WTC11 (cell line): ENCODE measurements at regions of chr15 and their contacts with region 1.

Region 1: DNA sequence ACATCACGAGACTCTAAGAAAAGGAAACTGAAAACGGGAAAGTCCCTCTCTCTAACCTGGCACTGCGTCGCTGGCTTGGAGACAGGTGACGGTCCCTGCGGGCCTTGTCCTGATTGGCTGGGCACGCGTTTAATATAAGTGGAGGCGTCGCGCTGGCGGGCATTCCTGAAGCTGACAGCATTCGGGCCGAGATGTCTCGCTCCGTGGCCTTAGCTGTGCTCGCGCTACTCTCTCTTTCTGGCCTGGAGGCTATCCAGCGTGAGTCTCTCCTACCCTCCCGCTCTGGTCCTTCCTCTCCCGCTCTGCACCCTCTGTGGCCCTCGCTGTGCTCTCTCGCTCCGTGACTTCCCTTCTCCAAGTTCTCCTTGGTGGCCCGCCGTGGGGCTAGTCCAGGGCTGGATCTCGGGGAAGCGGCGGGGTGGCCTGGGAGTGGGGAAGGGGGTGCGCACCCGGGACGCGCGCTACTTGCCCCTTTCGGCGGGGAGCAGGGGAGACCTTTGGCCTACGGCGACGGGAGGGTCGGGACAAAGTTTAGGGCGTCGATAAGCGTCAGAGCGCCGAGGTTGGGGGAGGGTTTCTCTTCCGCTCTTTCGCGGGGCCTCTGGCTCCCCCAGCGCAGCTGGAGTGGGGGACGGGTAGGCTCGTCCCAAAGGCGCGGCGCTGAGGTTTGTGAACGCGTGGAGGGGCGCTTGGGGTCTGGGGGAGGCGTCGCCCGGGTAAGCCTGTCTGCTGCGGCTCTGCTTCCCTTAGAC is at the start of gene B2M:
- DNase-seq: peak; percentile 94
- ATAC-seq: peak; percentile 95
- H3K4me3 Mint-ChIP-seq: peak within 1 kb of the TSS; percentile 94
- H3K27ac Mint-ChIP-seq: peak within 1 kb of the TSS; percentile 96
- H3K4me1 Mint-ChIP-seq: peaks cover 13% of the 10 kb centered on the region
- H3K27me3 Mint-ChIP-seq: peaks cover 15% of the 10 kb centered on the region
- CTCF ChIP-seq: no peak
- total RNA-seq, gene B2M: 88.2 to 105 TPM (median 102 TPM) in 3 replicates

Region 2: GRCh38 chr15:44620081-44620480 is 91.5 kb before region 1 on chr15:
- CTCF ChIA-PET with region 1: no interaction called
- POLR2A ChIA-PET with region 1: no interaction called
- DNase-seq: no peak
- ATAC-seq: no peak
- H3K4me3 Mint-ChIP-seq: no peak overlapping the region
- H3K27ac Mint-ChIP-seq: no peak overlapping the region
- H3K4me1 Mint-ChIP-seq: no peaks in the 10 kb centered on the region
- H3K27me3 Mint-ChIP-seq: no peaks in the 10 kb centered on the region
- CTCF ChIP-seq: no peak

Region 3: DNA sequence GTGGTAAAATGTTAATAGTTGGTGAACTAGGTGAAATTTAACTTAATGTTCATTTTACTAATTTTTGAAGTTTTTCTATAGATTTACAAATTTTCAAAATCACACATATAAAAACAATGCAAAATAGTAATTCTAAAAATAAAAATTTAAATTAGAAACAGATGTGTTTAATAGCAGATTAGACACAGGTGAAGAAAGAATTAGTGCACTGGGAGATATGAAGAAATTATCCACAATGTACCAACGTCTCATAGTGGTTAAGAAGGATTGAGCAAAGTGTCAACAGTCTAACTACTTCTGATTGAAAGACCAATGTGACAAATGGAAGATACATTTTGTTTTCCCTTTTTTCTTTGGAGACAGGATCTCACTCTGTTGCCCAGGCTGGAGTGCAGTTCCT is 74.6 kb before region 1 on chr15:
- CTCF ChIA-PET with region 1: no interaction called
- POLR2A ChIA-PET with region 1: no interaction called
- DNase-seq: no peak
- ATAC-seq: no peak
- H3K4me3 Mint-ChIP-seq: no peak overlapping the region
- H3K27ac Mint-ChIP-seq: no peak overlapping the region
- H3K4me1 Mint-ChIP-seq: no peaks in the 10 kb centered on the region
- H3K27me3 Mint-ChIP-seq: no peaks in the 10 kb centered on the region
- CTCF ChIP-seq: no peak

Region 4: GRCh38 chr15:44728576-44729407 is 17.3 kb after region 1 on chr15:
- CTCF ChIA-PET with region 1: interaction called, 18 read pairs
- POLR2A ChIA-PET with region 1: interaction called, 37 read pairs
- DNase-seq: peak; percentile 88
- ATAC-seq: peak; percentile 94
- H3K4me3 Mint-ChIP-seq: peak overlapping the region; percentile 97
- H3K27ac Mint-ChIP-seq: peak overlapping the region; percentile 99
- H3K4me1 Mint-ChIP-seq: peaks cover 32% of the 10 kb centered on the region
- H3K27me3 Mint-ChIP-seq: no peaks in the 10 kb centered on the region; the same call in 1 of the 2 replicates
- CTCF ChIP-seq: no peak

Region 5: GRCh38 chr15:44738340-44738984 is 26.9 kb after region 1 on chr15:
- CTCF ChIA-PET with region 1: interaction called, 67 read pairs
- POLR2A ChIA-PET with region 1: interaction called, 3 read pairs
- DNase-seq: no peak
- ATAC-seq: no peak
- H3K4me3 Mint-ChIP-seq: no peak overlapping the region
- H3K27ac Mint-ChIP-seq: no peak overlapping the region
- H3K4me1 Mint-ChIP-seq: peaks cover 8% of the 10 kb centered on the region
- H3K27me3 Mint-ChIP-seq: peaks cover 14% of the 10 kb centered on the region
- CTCF ChIP-seq: no peak